ENCODE measurements at regions of chr1 and their contacts with region 1.

Region 1: GRCh38 chr1:15810073-15810472 is 2.6 kb upstream of the UQCRHL start:
- DNase-seq: no peak
- ATAC-seq: no peak
- H3K4me3 ChIP-seq: no peak overlapping the region
- H3K27ac ChIP-seq: no peak overlapping the region
- H3K4me1 ChIP-seq: peaks cover 0 to 5% (median 0%) of the 10 kb centered on the region in 12 donors
- H3K27me3 ChIP-seq: no peaks in the 10 kb centered on the region
- CTCF ChIP-seq: no peak
- POLR2A ChIP-seq: no peak

Region 2: GRCh38 chr1:15736038-15736889 is 73.8 kb before region 1 on chr1 and contains the start of gene SLC25A34:
- intact Hi-C with region 1: no loop called
- DNase-seq: peak; percentile 80 to 93 (median 87)
- ATAC-seq: peak; percentile 82 to 92 (median 88)
- H3K4me3 ChIP-seq: peak within 1 kb of the TSS in 10 of 12 donors; percentile 14 to 47 (median 30)
- H3K27ac ChIP-seq: peak within 1 kb of the TSS; percentile 73 to 96 (median 84)
- H3K4me1 ChIP-seq: peaks cover 0 to 41% (median 17%) of the 10 kb centered on the region in 12 donors
- H3K27me3 ChIP-seq: no peaks in the 10 kb centered on the region
- CTCF ChIP-seq: peak in 1 of 12 donors; percentile 16
- POLR2A ChIP-seq: peak in 1 of 2 donors; percentile 48
- total RNA-seq, gene SLC25A34: 4.8 to 71.2 (median 17.8) TPM

Region 3: DNA sequence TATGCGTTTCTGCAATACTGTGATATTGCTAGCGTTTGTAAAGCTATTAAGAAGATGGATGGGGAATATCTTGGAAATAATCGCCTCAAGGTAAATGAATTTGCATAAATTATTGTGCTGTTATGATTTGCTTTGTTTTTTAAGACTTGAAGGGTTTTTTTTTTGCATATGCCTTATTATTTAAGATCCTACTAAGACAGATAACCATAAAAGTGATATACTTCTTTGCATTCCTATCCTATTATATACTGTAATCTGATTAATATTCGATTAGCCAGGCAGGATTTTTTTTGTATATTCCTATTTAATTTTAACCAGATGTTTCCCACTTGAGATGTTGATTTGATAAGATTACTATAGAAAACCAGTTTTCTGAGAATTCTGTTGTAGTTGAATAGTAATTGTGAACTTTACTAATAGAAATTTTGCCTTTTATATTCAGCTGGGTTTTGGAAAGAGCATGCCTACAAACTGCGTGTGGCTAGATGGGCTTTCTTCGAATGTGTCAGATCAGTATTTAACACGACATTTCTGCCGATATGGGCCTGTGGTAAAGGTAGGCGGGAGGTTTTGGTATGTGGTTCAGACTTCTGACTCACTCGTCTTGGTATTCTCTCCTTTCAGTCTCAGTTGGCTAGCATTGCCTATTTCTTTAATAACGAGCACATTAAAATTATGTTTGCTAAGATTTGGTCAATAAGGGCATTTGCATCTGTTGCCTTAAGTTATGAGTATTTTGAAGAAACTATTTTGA is 109.1 kb after region 1 on chr1:
- intact Hi-C with region 1: loop called in 1 of 10 experiments (anchors 10 kb)
- DNase-seq: no peak
- ATAC-seq: no peak
- H3K4me3 ChIP-seq: no peak overlapping the region
- H3K27ac ChIP-seq: no peak overlapping the region
- H3K4me1 ChIP-seq: peaks cover 0 to 23% (median 1%) of the 10 kb centered on the region in 12 donors
- H3K27me3 ChIP-seq: no peaks in the 10 kb centered on the region
- CTCF ChIP-seq: no peak
- POLR2A ChIP-seq: no peak

Measured in heart left ventricle (tissue), 16 donors.